Stomach (tissue), 19 donors: ENCODE measurements at regions of chr3 and their contacts with region 1.

Region 1: GRCh38 chr3:15268033-15268631 is 62.1 kb downstream of the CAPN7 start:
- DNase-seq: peak; percentile 86 to 95
- H3K4me3 ChIP-seq: no peak overlapping the region
- H3K27ac ChIP-seq: peak overlapping the region in 4 of 5 donors; percentile 17 to 78 (median 63)
- H3K4me1 ChIP-seq: peaks cover 4 to 54% (median 13%) of the 10 kb centered on the region in 4 donors
- H3K27me3 ChIP-seq: no peaks in the 10 kb centered on the region
- CTCF ChIP-seq: peak in 5 of 7 experiments; percentile 76 to 94 (median 91)
- EP300 ChIP-seq: no peak
- POLR2A ChIP-seq: no peak

Region 2: DNA sequence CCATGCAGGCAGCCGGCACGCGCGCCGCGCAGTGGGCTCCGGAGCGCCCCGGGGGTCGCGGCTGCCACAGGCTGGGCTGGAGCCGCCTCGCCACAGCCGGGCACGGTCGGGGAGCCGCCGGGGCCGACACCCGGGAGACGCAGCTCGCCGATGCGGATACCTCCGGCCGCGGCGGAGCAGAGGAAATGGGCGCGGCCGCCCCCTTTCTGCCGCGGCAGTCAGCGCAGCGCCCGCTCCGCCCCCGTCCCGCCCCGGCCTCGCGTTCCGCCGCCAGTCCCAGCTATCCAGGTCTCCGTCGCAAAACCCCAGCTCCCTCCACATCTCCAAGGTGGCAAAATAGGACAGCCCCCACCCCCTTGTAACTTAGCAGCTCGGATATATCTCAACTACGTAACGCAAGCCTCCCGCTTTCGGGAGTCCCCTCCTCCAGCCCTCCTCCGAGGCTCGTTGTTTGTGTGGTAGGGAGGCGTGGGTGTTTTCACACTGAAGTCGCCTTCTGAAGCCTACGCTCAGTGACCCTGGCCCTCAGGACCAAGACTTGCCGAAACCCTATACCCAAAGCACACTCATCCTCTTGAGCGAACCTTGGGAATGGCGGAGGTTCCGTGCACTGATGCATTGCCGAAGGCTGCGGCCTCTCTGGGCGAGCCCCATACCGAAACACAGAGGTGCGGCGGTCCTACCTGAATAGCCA is 64.4 kb after region 1 on chr3 and contains the start of gene SH3BP5:
- intact Hi-C with region 1: loop called (anchors 5 kb)
- DNase-seq: peak; percentile 76 to 93
- H3K4me3 ChIP-seq: peak within 1 kb of the TSS; percentile 70 to 94 (median 86)
- H3K27ac ChIP-seq: peak within 1 kb of the TSS; percentile 64 to 89 (median 83)
- H3K4me1 ChIP-seq: peaks cover 0 to 41% (median 30%) of the 10 kb centered on the region in 4 donors
- H3K27me3 ChIP-seq: peaks cover 0 to 4% (median 0%) of the 10 kb centered on the region in 3 donors
- CTCF ChIP-seq: peak in 5 of 7 experiments; percentile 28 to 87 (median 71)
- EP300 ChIP-seq: no peak
- POLR2A ChIP-seq: no peak
- total RNA-seq, gene SH3BP5: 1.8 to 43.7 (median 27.5) TPM

Region 3: DNA sequence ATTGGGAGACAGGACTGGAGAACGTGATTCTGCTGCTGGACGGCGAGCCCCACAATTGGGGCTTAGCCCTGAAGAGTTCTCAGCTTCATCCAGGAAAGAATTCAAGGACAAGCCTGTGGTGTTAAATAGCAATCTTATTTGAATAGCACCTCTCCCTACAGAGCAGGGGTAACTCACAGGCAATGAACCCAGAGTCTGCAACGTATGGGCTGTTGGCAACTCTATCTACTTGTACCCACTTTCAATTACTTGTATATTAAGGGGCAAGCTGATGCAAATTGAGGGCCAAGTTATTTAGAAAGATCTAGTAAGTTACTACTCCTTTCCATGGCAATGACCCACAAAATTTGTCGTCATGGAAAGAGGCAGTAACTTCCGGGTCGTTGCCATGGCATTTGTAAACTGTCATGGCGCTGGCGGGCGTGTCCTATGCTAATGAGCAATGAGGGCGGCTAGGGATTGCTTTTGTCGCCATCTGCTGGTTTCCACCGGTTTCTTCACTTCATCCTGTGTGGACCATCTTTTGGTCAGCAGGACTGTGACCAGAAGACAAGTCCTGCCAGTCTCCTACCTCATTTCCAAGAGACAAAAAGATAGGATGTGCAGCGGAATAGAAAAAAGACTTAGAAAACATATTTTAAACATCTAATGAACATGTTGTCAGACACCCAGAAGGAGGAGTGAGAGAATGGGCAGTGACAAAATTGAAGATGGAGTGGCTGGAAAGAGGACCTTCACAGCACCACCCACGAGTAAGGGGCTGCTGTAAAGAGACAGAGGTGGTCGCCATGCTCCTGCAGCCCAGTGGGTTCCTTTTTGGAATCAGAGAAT is 110.0 kb after region 1 on chr3:
- intact Hi-C with region 1: loop called (anchors 5 kb)
- DNase-seq: peak; percentile 97
- H3K4me3 ChIP-seq: peak overlapping the region in 2 of 4 donors; percentile 10 to 18
- H3K27ac ChIP-seq: peak overlapping the region in 4 of 5 donors; percentile 49 to 76 (median 61)
- H3K4me1 ChIP-seq: peaks cover 0 to 5% (median 2%) of the 10 kb centered on the region in 4 donors
- H3K27me3 ChIP-seq: no peaks in the 10 kb centered on the region
- CTCF ChIP-seq: peak in 5 of 7 experiments; percentile 64 to 96 (median 80)
- EP300 ChIP-seq: no peak
- POLR2A ChIP-seq: no peak